GM12878 (cell line): ENCODE measurements at regions of chr2 and their contacts with region 1.

Region 1: DNA sequence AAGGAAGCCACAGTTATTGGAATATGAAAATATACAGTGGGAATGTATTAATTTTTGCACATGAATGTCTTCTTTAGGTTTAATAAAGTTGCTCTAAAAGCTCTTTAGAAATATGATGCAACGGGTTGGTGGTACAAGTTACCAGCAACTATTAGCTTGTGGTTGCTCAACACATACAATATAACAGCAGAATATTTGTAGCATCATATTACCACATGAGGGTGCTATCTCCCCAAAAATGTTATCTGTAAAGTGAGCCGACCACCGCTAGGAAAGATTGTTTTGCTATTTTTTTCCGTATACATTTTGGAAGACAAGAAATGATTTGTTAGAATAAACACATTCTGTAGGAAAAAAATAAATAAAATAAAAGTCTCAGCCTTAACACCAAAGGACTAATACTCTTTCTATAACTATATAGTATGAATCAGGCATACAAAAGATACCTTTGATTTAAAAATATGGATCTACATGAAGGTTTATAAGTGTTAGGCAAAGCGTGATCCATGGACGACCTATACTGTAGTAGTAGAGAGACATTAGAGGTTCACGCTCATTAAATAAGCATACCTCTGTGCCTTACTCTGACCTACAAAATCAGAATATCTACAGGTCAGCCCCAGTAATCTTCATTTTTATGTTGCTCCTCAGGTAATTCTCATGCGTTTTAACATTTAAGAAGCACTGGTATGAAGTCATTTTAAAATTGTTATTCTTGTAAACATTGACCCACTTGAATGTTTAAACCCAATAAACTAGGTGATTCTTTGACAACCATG is 1110.6 kb upstream of the ACVR2A start:
- DNase-seq: peak; percentile 5
- ATAC-seq: peak; percentile 95
- H3K4me3 ChIP-seq: no peak overlapping the region
- H3K27ac ChIP-seq: no peak overlapping the region
- H3K4me1 ChIP-seq: no peaks in the 10 kb centered on the region
- H3K27me3 ChIP-seq: no peaks in the 10 kb centered on the region
- CTCF ChIP-seq: peak; percentile 40 to 57 (median 40); a peak in 5 of 6 replicates
- EP300 ChIP-seq: no peak
- POLR2A ChIP-seq: no peak
- RAD21 ChIP-seq: peak; percentile 50

Region 2: DNA sequence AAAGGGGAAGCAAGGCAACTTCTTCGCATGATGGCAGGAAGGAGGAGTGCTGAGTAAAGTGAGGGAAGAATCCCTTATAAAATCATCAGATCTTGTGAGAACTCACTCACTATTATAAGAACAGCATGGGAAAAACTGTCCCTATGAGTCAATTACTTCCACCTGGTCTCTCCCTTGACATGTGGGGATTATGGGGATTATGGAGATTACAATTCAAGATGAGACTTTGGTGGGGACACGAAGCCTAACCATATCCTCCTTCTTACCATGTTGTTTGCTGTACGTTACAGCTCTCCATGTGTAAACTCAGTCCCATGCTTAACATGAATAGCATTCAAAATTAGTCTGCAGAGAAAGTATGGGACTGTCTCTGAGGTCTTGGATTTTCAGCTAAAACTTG is 13.8 kb after region 1 on chr2:
- CTCF ChIA-PET with region 1: interaction called, 4 read pairs
- POLR2A ChIA-PET with region 1: interaction called, 11 read pairs
- RAD21 ChIA-PET with region 1: interaction called, 5 read pairs
- SMC1A ChIA-PET with region 1: interaction called, 5 read pairs
- in situ Hi-C with region 1: no loop called
- intact Hi-C with region 1: no loop called
- DNase-seq: no peak
- ATAC-seq: peak; percentile 27; the same call in 1 of the 3 replicates
- H3K4me3 ChIP-seq: no peak overlapping the region
- H3K27ac ChIP-seq: no peak overlapping the region
- H3K4me1 ChIP-seq: no peaks in the 10 kb centered on the region
- H3K27me3 ChIP-seq: no peaks in the 10 kb centered on the region
- CTCF ChIP-seq: no peak
- EP300 ChIP-seq: no peak
- POLR2A ChIP-seq: no peak
- RAD21 ChIP-seq: no peak

Region 3: DNA sequence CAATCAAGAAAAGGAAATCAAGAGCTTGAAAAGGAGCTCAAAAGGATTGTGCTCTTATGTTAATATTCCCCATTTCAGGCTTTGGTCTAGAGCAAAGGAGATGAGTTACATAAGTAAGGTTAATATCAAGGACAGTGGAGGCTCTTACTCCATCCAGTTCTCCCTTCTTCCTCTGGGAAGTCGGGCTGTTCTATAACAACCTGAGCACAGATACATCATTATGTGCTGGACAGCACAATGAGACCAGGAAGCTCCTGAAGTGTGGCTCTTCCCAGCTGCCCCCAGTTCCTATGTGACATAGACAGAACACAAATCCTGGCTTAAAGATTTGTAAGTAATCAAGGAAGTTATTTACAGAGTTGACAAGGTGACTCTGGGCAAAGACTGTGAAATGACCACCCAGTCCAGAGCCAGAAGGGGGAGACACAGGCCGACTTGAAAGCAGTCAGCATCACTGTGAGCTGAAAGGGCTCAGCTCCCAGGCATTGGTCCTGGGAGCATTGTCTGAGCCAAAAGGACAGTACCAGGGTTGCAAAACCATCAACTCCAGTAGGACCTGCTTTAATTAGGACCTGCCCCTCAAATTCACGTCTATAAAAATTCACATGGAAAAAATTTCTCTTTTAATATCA is 193.0 kb after region 1 on chr2:
- CTCF ChIA-PET with region 1: interaction called, 14 read pairs
- POLR2A ChIA-PET with region 1: no interaction called
- RAD21 ChIA-PET with region 1: interaction called, 9 read pairs
- SMC1A ChIA-PET with region 1: interaction called, 14 read pairs
- in situ Hi-C with region 1: no loop called
- intact Hi-C with region 1: loop called (anchors 10 kb)
- DNase-seq: no peak
- ATAC-seq: peak; percentile 86
- H3K4me3 ChIP-seq: no peak overlapping the region
- H3K27ac ChIP-seq: no peak overlapping the region
- H3K4me1 ChIP-seq: no peaks in the 10 kb centered on the region
- H3K27me3 ChIP-seq: no peaks in the 10 kb centered on the region
- CTCF ChIP-seq: peak; percentile 33 to 71 (median 57); a peak in 5 of 6 replicates
- EP300 ChIP-seq: no peak
- POLR2A ChIP-seq: no peak
- RAD21 ChIP-seq: peak; percentile 67

Region 4: DNA sequence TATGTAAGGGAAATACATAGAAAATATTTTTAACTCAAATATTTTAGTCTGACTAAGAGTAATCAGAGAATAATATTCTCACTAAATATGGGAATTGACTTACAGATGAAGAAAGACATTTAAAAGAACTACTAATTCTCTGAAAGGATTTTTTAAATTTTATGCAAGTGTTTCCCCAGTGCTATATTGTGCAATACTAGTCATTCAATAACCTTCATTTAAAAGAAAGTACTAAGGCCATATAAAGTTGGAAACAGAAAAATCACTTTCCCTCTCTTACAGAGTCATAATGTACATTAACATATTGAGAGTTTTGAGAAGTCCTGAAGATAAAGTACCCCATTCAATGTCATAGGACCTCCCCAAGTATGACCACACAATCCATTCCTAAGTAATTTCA is 526.0 kb after region 1 on chr2:
- CTCF ChIA-PET with region 1: no interaction called
- POLR2A ChIA-PET with region 1: no interaction called
- RAD21 ChIA-PET with region 1: no interaction called
- SMC1A ChIA-PET with region 1: no interaction called
- in situ Hi-C with region 1: no loop called
- intact Hi-C with region 1: no loop called
- DNase-seq: no peak
- ATAC-seq: no peak
- H3K4me3 ChIP-seq: no peak overlapping the region
- H3K27ac ChIP-seq: no peak overlapping the region
- H3K4me1 ChIP-seq: no peaks in the 10 kb centered on the region
- H3K27me3 ChIP-seq: no peaks in the 10 kb centered on the region
- CTCF ChIP-seq: no peak
- EP300 ChIP-seq: no peak
- POLR2A ChIP-seq: no peak
- RAD21 ChIP-seq: no peak